WTC11 (cell line): ENCODE measurements at regions of chr10 and their contacts with region 1.

Region 1: DNA sequence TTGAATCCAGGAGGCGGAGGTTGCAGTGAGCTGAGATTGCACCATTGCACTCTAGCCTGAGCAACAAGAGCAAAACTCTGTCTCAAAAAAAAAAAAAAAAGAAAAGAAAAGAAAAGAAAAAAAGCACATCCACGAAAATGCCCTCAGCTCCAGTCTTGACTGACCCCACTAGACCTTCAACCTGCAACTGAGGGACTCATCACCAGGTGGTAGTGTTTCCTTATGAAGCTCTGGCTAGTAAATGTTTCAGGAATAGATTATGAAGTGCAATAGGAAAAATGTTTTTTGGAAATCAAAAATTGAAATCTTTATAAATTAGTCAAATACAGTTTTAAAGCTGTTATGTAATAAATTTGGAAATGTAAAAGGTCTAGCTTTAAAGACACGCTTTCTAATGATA is 22.4 kb downstream of the TLL2 start:
- DNase-seq: no peak
- ATAC-seq: peak; percentile 53; the same call in 1 of the 2 replicates
- H3K4me3 Mint-ChIP-seq: no peak overlapping the region
- H3K27ac Mint-ChIP-seq: no peak overlapping the region
- H3K4me1 Mint-ChIP-seq: peaks cover 34% of the 10 kb centered on the region
- H3K27me3 Mint-ChIP-seq: no peaks in the 10 kb centered on the region; the same call in 1 of the 2 replicates
- CTCF ChIP-seq: no peak

Region 2: GRCh38 chr10:96257944-96258343 is 233.4 kb before region 1 on chr10:
- CTCF ChIA-PET with region 1: no interaction called
- POLR2A ChIA-PET with region 1: no interaction called
- DNase-seq: no peak
- ATAC-seq: no peak
- H3K4me3 Mint-ChIP-seq: no peak overlapping the region
- H3K27ac Mint-ChIP-seq: no peak overlapping the region
- H3K4me1 Mint-ChIP-seq: peaks cover 17% of the 10 kb centered on the region
- H3K27me3 Mint-ChIP-seq: no peaks in the 10 kb centered on the region
- CTCF ChIP-seq: no peak

Region 3: GRCh38 chr10:96448021-96448457 is 43.3 kb before region 1 on chr10:
- CTCF ChIA-PET with region 1: no interaction called
- POLR2A ChIA-PET with region 1: no interaction called
- DNase-seq: no peak
- ATAC-seq: no peak
- H3K4me3 Mint-ChIP-seq: no peak overlapping the region
- H3K27ac Mint-ChIP-seq: peak overlapping the region; percentile 100; the same call in 1 of the 2 replicates
- H3K4me1 Mint-ChIP-seq: peaks cover 72% of the 10 kb centered on the region
- H3K27me3 Mint-ChIP-seq: no peaks in the 10 kb centered on the region
- CTCF ChIP-seq: no peak

Region 4: GRCh38 chr10:96470116-96470743 is 21.1 kb before region 1 on chr10:
- CTCF ChIA-PET with region 1: interaction called, 12 read pairs
- POLR2A ChIA-PET with region 1: no interaction called
- DNase-seq: peak; percentile 73
- ATAC-seq: peak; percentile 95
- H3K4me3 Mint-ChIP-seq: no peak overlapping the region
- H3K27ac Mint-ChIP-seq: no peak overlapping the region
- H3K4me1 Mint-ChIP-seq: peaks cover 27% of the 10 kb centered on the region
- H3K27me3 Mint-ChIP-seq: no peaks in the 10 kb centered on the region
- CTCF ChIP-seq: peak; percentile 46

Region 5: GRCh38 chr10:96501985-96502384 is 10.7 kb after region 1 on chr10:
- CTCF ChIA-PET with region 1: interaction called, 16 read pairs
- POLR2A ChIA-PET with region 1: no interaction called
- DNase-seq: no peak
- ATAC-seq: no peak
- H3K4me3 Mint-ChIP-seq: no peak overlapping the region
- H3K27ac Mint-ChIP-seq: no peak overlapping the region
- H3K4me1 Mint-ChIP-seq: peaks cover 19% of the 10 kb centered on the region
- H3K27me3 Mint-ChIP-seq: no peaks in the 10 kb centered on the region; the same call in 1 of the 2 replicates
- CTCF ChIP-seq: no peak

Region 6: DNA sequence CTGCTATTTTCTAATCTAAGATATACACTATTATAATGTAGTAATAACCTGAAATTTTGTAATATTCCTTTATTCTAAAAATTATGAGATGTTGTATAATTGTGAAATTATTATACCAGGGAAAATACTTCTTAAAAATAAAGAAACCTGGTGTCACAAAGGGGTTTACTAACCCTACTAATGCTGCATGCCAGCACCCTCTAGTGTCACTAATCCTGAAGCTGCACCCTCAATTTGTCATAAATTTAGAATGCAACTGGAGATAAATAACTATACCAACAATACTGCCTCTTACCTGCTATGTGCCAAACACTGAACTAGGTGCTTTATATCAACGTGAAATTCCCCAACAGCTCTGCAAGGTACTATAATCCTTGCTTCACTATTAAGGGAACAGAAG is 64.7 kb after region 1 on chr10:
- CTCF ChIA-PET with region 1: interaction called, 11 read pairs
- POLR2A ChIA-PET with region 1: no interaction called
- DNase-seq: no peak
- ATAC-seq: no peak
- H3K4me3 Mint-ChIP-seq: no peak overlapping the region
- H3K27ac Mint-ChIP-seq: no peak overlapping the region
- H3K4me1 Mint-ChIP-seq: no peaks in the 10 kb centered on the region
- H3K27me3 Mint-ChIP-seq: no peaks in the 10 kb centered on the region
- CTCF ChIP-seq: no peak